GM10248 (cell line): ENCODE measurements at regions of chr6 and their contacts with region 1.

Region 1: DNA sequence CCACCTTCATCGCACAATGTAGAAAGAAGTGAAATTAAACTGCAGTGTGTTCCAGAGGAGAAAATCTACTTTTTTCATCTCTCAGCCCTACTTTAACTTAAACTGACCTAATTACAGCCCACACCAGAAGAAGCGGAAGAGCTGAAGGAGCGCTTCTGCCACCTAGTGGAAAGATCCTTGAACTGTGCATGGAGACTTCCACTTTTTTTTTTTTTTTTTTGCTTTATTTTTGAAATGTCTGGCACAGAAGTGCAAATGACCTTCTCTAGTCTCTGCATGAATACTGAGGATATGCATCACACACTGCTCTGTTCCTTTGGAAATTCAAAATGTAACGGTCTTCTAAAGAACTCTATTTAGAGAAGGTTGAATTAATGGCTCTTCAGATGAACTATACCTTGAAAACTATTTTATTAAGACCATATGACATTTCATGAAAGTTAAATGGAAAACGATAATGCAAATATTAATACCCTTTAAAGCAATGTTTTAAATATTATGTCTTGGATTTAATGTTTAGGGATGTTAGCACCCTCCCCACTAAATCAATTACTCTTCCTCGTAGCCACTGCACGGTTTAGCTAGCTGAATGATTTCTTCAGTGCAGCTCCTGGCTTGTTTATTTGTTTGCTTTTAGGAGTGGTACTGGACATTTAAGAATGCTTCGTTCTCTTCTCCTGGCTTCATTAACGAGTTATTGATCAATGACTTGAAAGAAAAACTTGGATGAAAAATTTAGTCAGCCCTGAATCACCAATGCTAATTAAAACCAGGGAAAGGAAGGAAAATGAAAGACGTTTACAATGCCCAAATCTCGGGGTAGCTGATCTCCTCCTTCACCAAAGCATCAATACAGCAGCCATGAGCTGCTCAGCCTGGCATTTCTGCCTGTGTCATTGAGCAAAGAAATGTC is 569.6 kb upstream of the GJE1 start:
- DNase-seq: peak; percentile 56
- CTCF ChIP-seq: peak; percentile 77

Region 2: GRCh38 chr6:140789466-140789865 is 773.6 kb before region 1 on chr6:
- CTCF ChIA-PET with region 1: no interaction called
- POLR2A ChIA-PET with region 1: no interaction called
- DNase-seq: no peak
- CTCF ChIP-seq: no peak

Region 3: DNA sequence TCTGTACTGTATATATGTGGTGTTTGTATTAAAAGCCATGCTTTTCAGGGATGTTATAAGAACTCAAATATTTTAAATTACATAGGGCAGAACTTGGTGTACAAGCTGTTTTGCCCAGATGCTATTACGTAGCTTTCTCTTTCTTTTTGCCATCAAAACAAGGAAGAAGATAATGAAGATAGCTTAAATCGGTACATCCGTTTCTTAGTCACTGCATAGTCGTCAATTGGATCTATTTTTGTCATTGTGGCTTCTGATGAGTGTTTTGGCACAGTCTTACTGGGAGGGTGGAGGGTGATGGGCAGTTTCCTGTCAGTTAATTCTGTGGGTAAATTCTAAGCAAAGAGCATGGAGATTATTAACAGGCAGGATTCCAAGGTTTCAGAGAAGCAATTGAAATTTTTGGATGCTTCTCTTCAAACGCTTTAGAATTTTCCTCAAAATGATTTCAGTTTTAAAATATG is 79.5 kb before region 1 on chr6:
- CTCF ChIA-PET with region 1: interaction called, 10 read pairs
- POLR2A ChIA-PET with region 1: no interaction called
- DNase-seq: peak; percentile 45
- CTCF ChIP-seq: no peak

Region 4: DNA sequence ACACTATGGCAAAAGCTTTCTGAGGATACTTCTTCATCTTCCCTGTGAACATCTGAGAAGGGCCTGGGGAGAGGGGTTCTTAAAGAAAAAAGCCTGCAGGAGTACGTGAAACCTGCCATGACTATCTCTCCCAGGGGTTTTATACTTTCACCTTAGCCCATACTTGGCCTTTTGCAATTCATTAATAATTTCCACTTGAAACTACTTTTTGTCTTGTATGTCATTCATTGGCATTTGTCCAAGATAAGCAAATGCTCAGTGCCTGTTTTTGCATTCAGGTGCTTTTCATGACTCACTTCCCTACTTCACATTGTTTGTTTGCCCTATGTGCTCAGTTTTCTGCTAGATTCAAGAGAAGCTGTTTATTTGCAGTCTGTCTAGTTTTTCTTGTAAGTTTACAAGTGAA is 10.6 kb before region 1 on chr6:
- CTCF ChIA-PET with region 1: interaction called, 12 read pairs
- POLR2A ChIA-PET with region 1: no interaction called
- DNase-seq: peak; percentile 9
- CTCF ChIP-seq: no peak

Region 5: DNA sequence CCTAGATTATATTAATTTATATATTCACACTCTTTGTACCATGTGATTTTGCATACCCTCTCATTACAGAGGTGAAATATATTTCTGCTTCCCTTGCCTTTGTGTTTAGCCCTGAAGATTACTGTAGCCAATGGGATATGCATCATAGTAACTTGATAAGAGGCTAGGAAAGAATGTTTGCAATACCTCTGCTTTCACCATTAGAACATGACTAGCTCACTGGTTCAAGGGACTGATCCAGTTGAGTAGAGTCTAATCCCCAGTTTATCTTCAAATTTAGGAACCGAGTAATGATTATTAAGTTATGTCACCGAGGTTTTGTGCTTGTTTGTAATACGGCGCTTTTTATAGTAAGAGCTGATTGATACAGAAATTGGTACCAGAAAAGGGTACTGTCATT is 17.0 kb after region 1 on chr6:
- CTCF ChIA-PET with region 1: interaction called, 10 read pairs
- POLR2A ChIA-PET with region 1: no interaction called
- DNase-seq: no peak
- CTCF ChIP-seq: no peak

Region 6: DNA sequence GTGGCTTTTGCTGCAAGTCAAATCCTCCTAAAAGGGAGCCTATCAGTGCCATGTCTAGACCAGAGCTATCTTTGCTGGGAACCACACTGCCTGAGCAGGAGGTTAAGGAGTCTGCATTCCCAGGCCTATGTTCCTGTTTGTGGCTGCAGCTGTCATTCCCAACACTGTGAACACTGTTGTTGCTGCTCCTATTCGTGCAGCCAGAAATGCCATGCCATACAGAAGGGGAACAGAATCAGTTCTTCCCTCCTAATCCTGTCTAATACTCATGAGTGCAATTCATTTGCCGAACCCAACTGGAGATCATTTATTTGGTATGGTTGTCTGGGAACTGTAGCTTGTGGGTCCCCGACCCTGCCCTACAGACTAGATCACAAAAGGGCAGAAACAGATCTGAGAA is 163.1 kb after region 1 on chr6:
- CTCF ChIA-PET with region 1: no interaction called
- POLR2A ChIA-PET with region 1: no interaction called
- DNase-seq: no peak
- CTCF ChIP-seq: no peak